CD8-positive, alpha-beta T cell (primary cell): ENCODE measurements at regions of chr1 and their contacts with region 1.

Region 1: GRCh38 chr1:54459726-54460191 is 53.6 kb upstream of the SSBP3 start:
- DNase-seq: peak in 2 of 9 experiments; percentile 20 to 31
- ATAC-seq: peak; percentile 36
- H3K4me3 ChIP-seq: peak overlapping the region in 1 of 2 experiments; percentile 30
- H3K4me3 Mint-ChIP-seq: peak overlapping the region; percentile 51
- H3K27ac ChIP-seq: peak overlapping the region in 1 of 2 experiments; percentile 45
- H3K27ac Mint-ChIP-seq: peak overlapping the region; percentile 83
- H3K4me1 ChIP-seq: peaks cover 41% of the 10 kb centered on the region
- H3K4me1 Mint-ChIP-seq: peaks cover 49% of the 10 kb centered on the region
- H3K27me3 ChIP-seq: no peaks in the 10 kb centered on the region
- H3K27me3 Mint-ChIP-seq: no peaks in the 10 kb centered on the region
- CTCF ChIP-seq: no peak

Region 2: GRCh38 chr1:54016313-54017262 is 443.2 kb before region 1 on chr1:
- CTCF ChIA-PET with region 1: no interaction called
- POLR2A ChIA-PET with region 1: no interaction called
- intact Hi-C with region 1: no loop called
- DNase-seq: peak in 1 of 9 experiments; percentile 27
- ATAC-seq: no peak
- H3K4me3 ChIP-seq: no peak overlapping the region
- H3K4me3 Mint-ChIP-seq: no peak overlapping the region
- H3K27ac ChIP-seq: no peak overlapping the region
- H3K27ac Mint-ChIP-seq: no peak overlapping the region
- H3K4me1 ChIP-seq: no peaks in the 10 kb centered on the region
- H3K4me1 Mint-ChIP-seq: no peaks in the 10 kb centered on the region
- H3K27me3 ChIP-seq: no peaks in the 10 kb centered on the region
- H3K27me3 Mint-ChIP-seq: peaks cover under 1% of the 10 kb centered on the region
- CTCF ChIP-seq: no peak

Region 3: DNA sequence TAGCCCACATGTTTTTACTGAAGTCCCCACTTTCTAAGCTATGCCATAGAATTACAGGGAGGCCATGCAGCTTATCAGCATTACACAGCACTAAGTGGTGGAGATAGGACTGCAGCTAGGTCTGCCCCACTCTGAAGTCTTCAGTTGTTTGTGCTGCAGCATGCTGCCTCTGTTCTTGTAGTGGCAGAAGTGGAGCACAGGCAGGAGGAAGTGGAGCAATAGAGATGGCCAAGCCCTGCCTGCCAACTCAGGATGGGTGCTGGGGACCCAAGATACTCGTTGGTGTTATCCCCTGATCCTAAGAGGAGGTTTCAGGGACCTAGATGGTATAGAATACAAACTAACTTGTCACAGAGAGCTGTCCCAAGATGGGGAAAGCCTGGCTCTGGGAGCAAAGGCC is 246.9 kb before region 1 on chr1:
- CTCF ChIA-PET with region 1: no interaction called
- POLR2A ChIA-PET with region 1: no interaction called
- intact Hi-C with region 1: no loop called
- DNase-seq: no peak
- ATAC-seq: no peak
- H3K4me3 ChIP-seq: no peak overlapping the region
- H3K4me3 Mint-ChIP-seq: no peak overlapping the region
- H3K27ac ChIP-seq: no peak overlapping the region
- H3K27ac Mint-ChIP-seq: no peak overlapping the region
- H3K4me1 ChIP-seq: no peaks in the 10 kb centered on the region
- H3K4me1 Mint-ChIP-seq: no peaks in the 10 kb centered on the region
- H3K27me3 ChIP-seq: no peaks in the 10 kb centered on the region
- H3K27me3 Mint-ChIP-seq: no peaks in the 10 kb centered on the region
- CTCF ChIP-seq: no peak

Region 4: DNA sequence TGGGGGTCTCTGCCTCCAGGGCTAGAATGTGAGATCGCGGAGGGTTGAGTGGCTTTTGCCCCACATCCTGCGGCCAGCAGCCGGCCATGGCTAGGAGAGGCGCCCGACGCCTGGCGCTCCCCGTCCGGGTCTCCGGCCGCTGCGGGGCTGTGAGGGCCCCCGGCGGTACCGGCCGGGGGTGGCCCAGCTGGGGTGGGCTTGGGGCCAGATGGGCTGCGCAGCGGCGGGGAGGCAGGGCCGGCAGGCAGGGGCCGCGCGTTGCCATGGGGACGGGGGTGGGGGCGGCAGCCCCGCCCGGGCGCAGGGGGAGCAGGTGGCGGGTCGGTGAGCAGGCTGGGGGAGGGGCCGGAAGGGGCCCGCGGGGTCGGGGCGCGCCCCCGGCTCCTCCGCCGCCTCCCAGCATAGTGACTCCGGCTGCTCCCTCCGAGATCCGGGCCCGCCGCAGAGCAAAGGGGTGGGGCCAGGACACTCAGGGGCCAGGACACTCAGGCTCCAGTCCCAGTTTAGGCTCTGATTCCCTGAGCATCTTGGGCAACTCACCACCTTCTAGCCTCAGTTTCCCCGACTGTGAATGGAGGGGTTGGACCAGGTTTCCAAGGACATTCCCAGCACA is 15.0 kb after region 1 on chr1:
- CTCF ChIA-PET with region 1: interaction called, 4 read pairs
- POLR2A ChIA-PET with region 1: interaction called, 5 read pairs
- intact Hi-C with region 1: loop called in 1 of 2 experiments (anchors 2 kb)
- DNase-seq: peak in 5 of 9 experiments; percentile 42 to 67 (median 57)
- ATAC-seq: peak; percentile 56
- H3K4me3 ChIP-seq: peak overlapping the region; percentile 42 to 46
- H3K4me3 Mint-ChIP-seq: peak overlapping the region; percentile 88
- H3K27ac ChIP-seq: peak overlapping the region in 1 of 2 experiments; percentile 84
- H3K27ac Mint-ChIP-seq: peak overlapping the region; percentile 87
- H3K4me1 ChIP-seq: peaks cover 41% of the 10 kb centered on the region
- H3K4me1 Mint-ChIP-seq: peaks cover 51% of the 10 kb centered on the region
- H3K27me3 ChIP-seq: no peaks in the 10 kb centered on the region
- H3K27me3 Mint-ChIP-seq: no peaks in the 10 kb centered on the region
- CTCF ChIP-seq: no peak

Region 5: GRCh38 chr1:54547601-54548388 is 88.0 kb after region 1 on chr1 and contains the start of gene ACOT11:
- CTCF ChIA-PET with region 1: no interaction called
- POLR2A ChIA-PET with region 1: no interaction called
- intact Hi-C with region 1: no loop called
- DNase-seq: no peak
- ATAC-seq: no peak
- H3K4me3 ChIP-seq: no peak within 1 kb of the TSS
- H3K4me3 Mint-ChIP-seq: no peak within 1 kb of the TSS
- H3K27ac ChIP-seq: no peak within 1 kb of the TSS
- H3K27ac Mint-ChIP-seq: no peak within 1 kb of the TSS
- H3K4me1 ChIP-seq: peaks cover 4% of the 10 kb centered on the region
- H3K4me1 Mint-ChIP-seq: peaks cover 5% of the 10 kb centered on the region
- H3K27me3 ChIP-seq: no peaks in the 10 kb centered on the region
- H3K27me3 Mint-ChIP-seq: no peaks in the 10 kb centered on the region
- CTCF ChIP-seq: no peak
- total RNA-seq, gene ACOT11: 0.14 to 0.27 TPM